OCI-LY7 (cell line): ENCODE measurements at regions of chr17 and their contacts with region 1.

Region 1: GRCh38 chr17:59804901-59805465 is 87.8 kb downstream of the TUBD1 start:
- DNase-seq: no peak
- H3K4me3 ChIP-seq: peak overlapping the region; percentile 35
- H3K27ac ChIP-seq: peak overlapping the region; percentile 0
- H3K4me1 ChIP-seq: peaks cover 22% of the 10 kb centered on the region
- CTCF ChIP-seq: no peak

Region 2: GRCh38 chr17:59840329-59840907 is 35.4 kb after region 1 on chr17:
- CTCF ChIA-PET with region 1: no interaction called
- POLR2A ChIA-PET with region 1: interaction called, 3 read pairs
- intact Hi-C with region 1: loop called (anchors 2 kb)
- DNase-seq: no peak
- H3K4me3 ChIP-seq: peak overlapping the region; percentile 72
- H3K27ac ChIP-seq: no peak overlapping the region
- H3K4me1 ChIP-seq: peaks cover 63% of the 10 kb centered on the region
- CTCF ChIP-seq: no peak